Right cardiac atrium (tissue), 5 donors: ENCODE measurements at regions of chr18 and their contacts with region 1.

Region 1: DNA sequence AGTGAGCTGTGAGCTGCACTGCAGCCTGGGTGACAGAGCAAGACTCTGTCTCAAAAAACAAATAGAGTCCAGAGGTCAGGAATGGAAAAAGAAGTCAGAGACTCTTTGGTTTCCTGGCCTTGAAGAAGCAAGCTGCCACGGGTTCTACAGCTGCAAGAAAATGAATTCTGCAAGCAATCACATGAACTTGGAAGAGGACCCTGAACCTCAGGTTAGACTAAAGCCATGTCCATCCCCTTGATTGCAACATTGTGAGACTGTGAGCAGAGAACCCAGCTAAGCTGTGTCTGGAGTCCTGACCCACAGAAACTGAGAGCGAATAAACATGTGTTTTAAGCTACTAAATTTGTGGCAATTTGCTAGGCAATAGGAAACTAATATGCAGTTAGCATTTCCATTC is 12.9 kb upstream of the MIB1 start:
- DNase-seq: no peak
- ATAC-seq: no peak
- H3K4me3 ChIP-seq: no peak overlapping the region
- H3K27ac ChIP-seq: no peak overlapping the region
- H3K4me1 ChIP-seq: no peaks in the 10 kb centered on the region
- H3K27me3 ChIP-seq: no peaks in the 10 kb centered on the region

Region 2: DNA sequence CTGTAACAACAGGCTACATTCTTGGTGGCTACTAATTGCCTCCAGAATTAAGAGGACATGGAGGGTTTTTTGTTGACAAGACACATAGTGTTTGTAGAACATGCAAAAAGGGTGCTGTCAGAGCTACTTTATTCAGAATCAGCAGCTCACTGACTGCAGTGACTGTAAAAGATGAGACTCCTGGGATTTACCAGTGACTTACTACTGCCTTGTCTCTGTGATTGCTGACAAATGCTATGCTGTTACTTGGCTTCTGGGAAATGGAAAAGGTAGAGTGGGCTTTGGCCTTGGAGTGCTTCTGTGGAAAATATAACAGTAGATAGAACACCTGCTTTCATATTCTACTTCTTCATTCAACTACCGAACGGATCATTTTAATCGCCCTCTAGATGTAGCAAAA is 437.9 kb before region 1 on chr18:
- intact Hi-C with region 1: no loop called
- DNase-seq: no peak
- ATAC-seq: no peak
- H3K4me3 ChIP-seq: no peak overlapping the region
- H3K27ac ChIP-seq: no peak overlapping the region
- H3K4me1 ChIP-seq: no peaks in the 10 kb centered on the region
- H3K27me3 ChIP-seq: no peaks in the 10 kb centered on the region

Region 3: GRCh38 chr18:21656402-21656801 is 71.3 kb before region 1 on chr18:
- intact Hi-C with region 1: loop called in 1 of 4 experiments (anchors 10 kb)
- DNase-seq: no peak
- ATAC-seq: no peak
- H3K4me3 ChIP-seq: no peak overlapping the region
- H3K27ac ChIP-seq: no peak overlapping the region
- H3K4me1 ChIP-seq: no peaks in the 10 kb centered on the region
- H3K27me3 ChIP-seq: no peaks in the 10 kb centered on the region

Region 4: DNA sequence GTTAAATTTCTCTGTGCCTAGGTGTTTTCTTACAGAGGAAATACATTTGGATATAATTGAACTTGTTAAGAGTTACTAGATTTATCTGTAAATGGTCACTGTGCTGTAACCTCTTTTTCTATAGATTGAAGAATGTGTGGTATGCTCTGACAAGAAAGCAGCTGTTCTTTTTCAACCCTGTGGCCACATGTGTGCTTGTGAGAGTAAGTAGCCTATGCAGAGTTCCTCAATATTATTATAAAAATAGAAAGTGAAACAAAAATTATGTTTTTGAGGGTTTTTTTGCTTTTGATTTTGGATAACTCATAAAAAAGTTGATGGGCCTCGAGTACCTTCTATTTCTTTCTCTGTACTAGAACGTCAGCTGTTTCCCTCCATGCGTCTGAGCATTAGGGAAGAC is 125.3 kb after region 1 on chr18:
- intact Hi-C with region 1: no loop called
- DNase-seq: no peak
- ATAC-seq: no peak
- H3K4me3 ChIP-seq: no peak overlapping the region
- H3K27ac ChIP-seq: no peak overlapping the region
- H3K4me1 ChIP-seq: no peaks in the 10 kb centered on the region
- H3K27me3 ChIP-seq: no peaks in the 10 kb centered on the region